Naive thymus-derived CD8-positive, alpha-beta T cell (primary cell): ENCODE measurements at regions of chr16 and their contacts with region 1.

Region 1: GRCh38 chr16:67935402-67936123 is 1.1 kb downstream of the PSMB10 start:
- DNase-seq: peak; percentile 81 to 97 (median 93)
- ATAC-seq: peak; percentile 83 to 91
- H3K4me3 Mint-ChIP-seq: peak overlapping the region; percentile 99 to 100 (median 100)
- H3K27ac Mint-ChIP-seq: peak overlapping the region; percentile 93 to 99 (median 98)
- H3K4me1 Mint-ChIP-seq: peaks cover 27 to 47% (median 43%) of the 10 kb centered on the region in 4 donors
- H3K27me3 Mint-ChIP-seq: no peaks in the 10 kb centered on the region

Region 2: DNA sequence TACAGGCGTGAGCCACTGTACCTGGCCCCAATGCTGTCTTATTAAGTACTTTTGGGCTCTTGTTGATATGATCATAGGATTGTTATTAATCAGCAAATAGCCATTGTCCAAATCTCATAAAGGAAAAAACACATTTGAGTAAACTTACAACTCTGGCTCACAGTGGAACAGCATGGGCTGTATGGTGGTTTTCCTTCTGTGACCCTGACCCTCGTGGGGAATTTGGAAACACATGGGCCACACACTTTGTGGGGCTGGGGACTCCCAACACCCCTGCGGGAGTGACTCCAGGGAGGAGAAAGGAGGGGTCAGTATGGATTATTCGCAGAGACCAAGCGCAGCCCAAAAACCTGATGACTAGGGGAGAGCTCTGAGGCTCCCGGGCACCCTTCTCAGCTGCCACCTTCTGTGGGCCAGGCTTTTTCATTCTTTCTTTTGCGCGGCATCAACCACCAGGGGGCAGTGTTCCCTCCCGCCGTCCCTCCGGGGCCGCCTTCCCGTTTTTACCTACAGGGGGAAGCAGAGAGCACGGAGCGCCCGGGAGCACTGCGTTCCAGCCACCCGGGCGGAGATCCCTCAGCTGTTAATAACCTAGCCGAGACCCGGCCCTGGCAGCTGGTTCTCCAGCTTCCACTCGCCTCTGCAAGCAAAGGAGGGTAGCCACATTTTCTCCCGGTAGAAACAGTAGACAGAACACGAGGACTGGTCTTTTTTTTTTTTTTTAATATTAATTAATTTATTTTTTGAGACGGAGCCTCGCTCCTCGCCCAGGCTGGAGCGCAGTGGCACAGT is 119.1 kb before region 1 on chr16:
- POLR2A ChIA-PET with region 1: no interaction called
- DNase-seq: peak; percentile 74 to 97 (median 89)
- ATAC-seq: peak; percentile 98 to 99
- H3K4me3 Mint-ChIP-seq: peak overlapping the region in 7 of 10 donors; percentile 30 to 80 (median 48)
- H3K27ac Mint-ChIP-seq: peak overlapping the region in 5 of 10 donors; percentile 11 to 82 (median 69)
- H3K4me1 Mint-ChIP-seq: peaks cover 3 to 7% (median 6%) of the 10 kb centered on the region in 4 donors
- H3K27me3 Mint-ChIP-seq: no peaks in the 10 kb centered on the region

Region 3: DNA sequence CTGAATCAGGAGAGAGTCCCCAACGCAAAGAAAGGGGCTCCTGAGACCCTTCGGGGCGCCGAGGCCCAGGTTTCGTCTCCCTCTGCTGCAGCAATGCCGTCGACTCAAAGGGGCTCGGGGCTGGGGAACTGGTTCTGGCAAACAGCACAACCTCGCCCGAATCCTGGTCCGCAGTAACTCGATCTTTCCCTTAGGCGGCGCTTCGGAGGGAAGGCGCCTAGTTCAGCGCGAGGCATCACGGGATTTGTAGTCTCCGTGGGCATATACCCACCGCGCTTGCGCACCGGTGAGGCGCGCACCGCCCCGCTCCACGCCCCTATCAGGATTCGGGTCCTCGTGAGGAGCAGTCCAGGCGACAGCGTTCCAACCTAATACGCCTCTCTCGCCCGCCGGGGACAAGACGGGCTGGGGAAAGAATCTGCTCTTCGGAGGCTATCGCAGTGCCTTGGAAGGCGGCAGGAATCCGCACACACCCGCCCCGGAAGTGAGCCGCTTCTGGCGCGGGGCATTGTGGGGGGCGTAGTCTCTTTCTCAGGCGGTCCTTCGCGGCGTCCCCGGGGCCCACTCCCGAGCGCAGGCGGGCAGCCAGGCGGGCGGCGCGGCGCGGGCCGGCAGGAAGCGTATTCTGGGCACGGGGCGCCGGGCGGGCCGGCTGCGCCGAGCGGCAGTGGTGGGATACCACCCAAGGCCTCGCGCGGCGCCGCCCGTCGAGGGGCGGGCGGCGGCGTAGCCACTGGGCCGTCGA is 93.6 kb before region 1 on chr16 and contains the start of gene THAP11:
- POLR2A ChIA-PET with region 1: interaction called, 11 read pairs
- DNase-seq: peak; percentile 86 to 99 (median 94)
- ATAC-seq: peak; percentile 52 to 59
- H3K4me3 Mint-ChIP-seq: peak within 1 kb of the TSS; percentile 93 to 97 (median 96)
- H3K27ac Mint-ChIP-seq: peak within 1 kb of the TSS; percentile 83 to 99 (median 98)
- H3K4me1 Mint-ChIP-seq: peaks cover 14 to 41% (median 35%) of the 10 kb centered on the region in 4 donors
- H3K27me3 Mint-ChIP-seq: no peaks in the 10 kb centered on the region
- polyA plus RNA-seq, gene THAP11: 132 to 158 (median 143) TPM

Region 4: DNA sequence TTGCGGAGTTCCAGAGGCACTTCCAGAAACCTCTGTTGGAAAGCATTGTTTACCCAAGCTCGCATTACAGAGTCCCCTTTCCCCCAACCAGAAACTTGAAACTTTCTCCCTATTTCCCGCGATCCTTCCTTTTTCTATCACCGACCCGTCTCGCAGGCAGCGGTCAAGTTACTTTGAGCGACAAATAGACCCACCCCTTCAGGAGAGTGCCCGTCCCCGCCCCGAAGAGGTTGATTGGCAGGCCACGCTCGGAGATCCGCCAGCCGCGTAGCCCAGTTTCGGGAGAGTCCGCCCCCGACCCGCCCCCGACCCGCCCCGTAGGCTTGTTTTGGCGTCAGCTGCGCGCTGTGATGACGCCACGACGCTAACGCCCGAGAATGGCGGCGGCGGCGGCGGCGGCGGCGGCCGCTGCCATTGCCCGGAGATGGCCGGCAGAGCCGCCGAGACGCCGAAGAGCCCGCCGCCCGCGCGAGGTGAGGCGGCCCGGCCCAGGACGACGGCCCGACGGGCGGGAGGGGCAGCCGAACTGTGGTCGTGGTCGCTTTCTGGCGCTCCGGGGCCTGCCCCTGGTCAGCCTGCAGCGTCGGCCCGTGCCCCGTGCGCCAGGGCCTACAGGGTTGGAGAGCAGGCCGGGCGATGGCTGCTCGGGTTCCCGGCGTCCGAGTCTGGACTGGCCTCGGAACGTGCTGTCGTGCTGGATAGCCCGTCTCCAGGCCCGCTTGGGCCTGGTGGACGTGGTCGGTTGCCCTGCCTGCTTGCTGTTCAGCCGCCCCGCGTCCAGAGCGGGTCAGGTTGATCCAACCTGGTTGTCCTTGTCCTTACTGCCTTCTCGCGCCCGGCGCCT is 42.4 kb before region 1 on chr16 and contains the start of gene PSKH1:
- POLR2A ChIA-PET with region 1: interaction called, 15 read pairs
- DNase-seq: peak; percentile 82 to 96 (median 89)
- ATAC-seq: peak; percentile 97 to 98
- H3K4me3 Mint-ChIP-seq: peak within 1 kb of the TSS; percentile 89 to 99 (median 94)
- H3K27ac Mint-ChIP-seq: peak within 1 kb of the TSS; percentile 73 to 99 (median 97)
- H3K4me1 Mint-ChIP-seq: peaks cover 15 to 48% (median 39%) of the 10 kb centered on the region in 4 donors
- H3K27me3 Mint-ChIP-seq: no peaks in the 10 kb centered on the region
- polyA plus RNA-seq, gene PSKH1: 20.8 to 34.5 (median 22.2) TPM

Region 5: GRCh38 chr16:67999985-68000384 is 64.4 kb after region 1 on chr16:
- POLR2A ChIA-PET with region 1: interaction called, 27 read pairs
- DNase-seq: peak in 1 of 10 donors; percentile 30
- ATAC-seq: peak; percentile 14
- H3K4me3 Mint-ChIP-seq: peak overlapping the region; percentile 78 to 97 (median 88)
- H3K27ac Mint-ChIP-seq: peak overlapping the region; percentile 88 to 100 (median 96)
- H3K4me1 Mint-ChIP-seq: peaks cover 20 to 78% (median 58%) of the 10 kb centered on the region in 4 donors
- H3K27me3 Mint-ChIP-seq: no peaks in the 10 kb centered on the region

Region 6: GRCh38 chr16:68040507-68041288 is 105.1 kb after region 1 on chr16:
- POLR2A ChIA-PET with region 1: interaction called, 16 read pairs
- DNase-seq: peak; percentile 78 to 95 (median 88)
- ATAC-seq: peak; percentile 99 to 100
- H3K4me3 Mint-ChIP-seq: peak overlapping the region in 2 of 10 donors; percentile 27 to 47
- H3K27ac Mint-ChIP-seq: peak overlapping the region in 9 of 10 donors; percentile 21 to 92 (median 66)
- H3K4me1 Mint-ChIP-seq: peaks cover 5 to 35% (median 11%) of the 10 kb centered on the region in 4 donors
- H3K27me3 Mint-ChIP-seq: no peaks in the 10 kb centered on the region

Region 7: GRCh38 chr16:68094614-68094934 is 159.0 kb after region 1 on chr16:
- POLR2A ChIA-PET with region 1: no interaction called
- DNase-seq: no peak
- ATAC-seq: no peak
- H3K4me3 Mint-ChIP-seq: peak overlapping the region in 9 of 10 donors; percentile 24 to 75 (median 64)
- H3K27ac Mint-ChIP-seq: peak overlapping the region in 9 of 10 donors; percentile 41 to 93 (median 87)
- H3K4me1 Mint-ChIP-seq: peaks cover 46 to 90% (median 82%) of the 10 kb centered on the region in 4 donors
- H3K27me3 Mint-ChIP-seq: no peaks in the 10 kb centered on the region